Activated CD4-positive, alpha-beta T cell treated with anti-CD3 and anti-CD28 coated beads for 36 hours (primary cell): ENCODE measurements at regions of chr1 and their contacts with region 1.

Region 1: DNA sequence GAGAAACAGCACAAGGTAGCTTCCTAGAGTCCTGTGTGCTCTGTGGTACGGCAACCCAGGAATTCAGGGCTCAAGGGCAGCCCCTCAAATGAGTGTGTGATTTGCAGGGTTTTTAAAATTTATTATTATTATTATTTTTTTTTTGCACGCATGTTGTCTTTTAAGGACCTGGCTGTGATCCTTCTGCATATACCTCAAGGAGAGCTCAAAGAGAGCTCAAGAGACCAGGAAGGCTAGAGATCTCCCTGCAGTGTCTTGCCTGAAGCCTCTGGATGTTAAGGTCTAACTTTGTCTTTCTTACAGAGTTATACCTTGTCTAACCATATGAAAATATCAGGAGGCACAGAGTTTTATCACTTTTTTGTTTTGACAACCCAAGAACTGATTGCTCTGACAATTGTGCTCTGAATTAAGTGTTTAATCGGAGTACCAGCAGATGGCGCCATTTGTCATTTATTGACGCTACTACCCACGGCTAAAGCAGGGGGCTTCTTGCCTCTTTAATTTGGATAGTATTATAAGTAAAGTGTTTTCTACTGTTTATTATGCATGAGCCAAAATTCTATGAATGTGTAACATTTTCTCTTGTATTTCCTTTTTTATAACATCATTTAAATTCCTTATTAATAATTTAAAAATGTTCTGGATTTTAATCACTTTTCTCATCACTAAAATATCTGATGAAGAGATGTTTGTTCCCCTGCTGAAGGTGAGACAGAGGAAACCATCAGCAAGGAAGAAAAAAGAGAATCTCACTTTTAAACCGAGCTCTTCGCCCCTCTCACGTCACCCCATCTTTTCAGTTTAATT is 35.8 kb upstream of the LMO4 start:
- DNase-seq: peak; percentile 76
- ATAC-seq: peak; percentile 51
- H3K4me3 Mint-ChIP-seq: no peak overlapping the region
- H3K27ac Mint-ChIP-seq: no peak overlapping the region
- H3K4me1 Mint-ChIP-seq: no peaks in the 10 kb centered on the region
- H3K27me3 Mint-ChIP-seq: peaks cover 3% of the 10 kb centered on the region

Region 2: GRCh38 chr1:88061492-88062177 is 768.7 kb after region 1 on chr1:
- CTCF ChIA-PET with region 1: no interaction called
- POLR2A ChIA-PET with region 1: no interaction called
- intact Hi-C with region 1: loop called in 1 of 2 experiments (anchors 5 kb)
- DNase-seq: peak; percentile 40
- ATAC-seq: no peak
- H3K4me3 Mint-ChIP-seq: no peak overlapping the region
- H3K27ac Mint-ChIP-seq: no peak overlapping the region
- H3K4me1 Mint-ChIP-seq: no peaks in the 10 kb centered on the region
- H3K27me3 Mint-ChIP-seq: peaks cover 1% of the 10 kb centered on the region

Region 3: GRCh38 chr1:88595355-88596002 is 1302.6 kb after region 1 on chr1:
- CTCF ChIA-PET with region 1: interaction called, 3 read pairs
- POLR2A ChIA-PET with region 1: no interaction called
- intact Hi-C with region 1: loop called in 1 of 2 experiments (anchors 5 kb)
- DNase-seq: no peak
- ATAC-seq: peak; percentile 63
- H3K4me3 Mint-ChIP-seq: no peak overlapping the region
- H3K27ac Mint-ChIP-seq: no peak overlapping the region
- H3K4me1 Mint-ChIP-seq: peaks cover 4% of the 10 kb centered on the region
- H3K27me3 Mint-ChIP-seq: peaks cover 3% of the 10 kb centered on the region